Left ventricle myocardium superior (tissue), 1 donor: ENCODE measurements at regions of chr15 and their contacts with region 1.

Region 1: DNA sequence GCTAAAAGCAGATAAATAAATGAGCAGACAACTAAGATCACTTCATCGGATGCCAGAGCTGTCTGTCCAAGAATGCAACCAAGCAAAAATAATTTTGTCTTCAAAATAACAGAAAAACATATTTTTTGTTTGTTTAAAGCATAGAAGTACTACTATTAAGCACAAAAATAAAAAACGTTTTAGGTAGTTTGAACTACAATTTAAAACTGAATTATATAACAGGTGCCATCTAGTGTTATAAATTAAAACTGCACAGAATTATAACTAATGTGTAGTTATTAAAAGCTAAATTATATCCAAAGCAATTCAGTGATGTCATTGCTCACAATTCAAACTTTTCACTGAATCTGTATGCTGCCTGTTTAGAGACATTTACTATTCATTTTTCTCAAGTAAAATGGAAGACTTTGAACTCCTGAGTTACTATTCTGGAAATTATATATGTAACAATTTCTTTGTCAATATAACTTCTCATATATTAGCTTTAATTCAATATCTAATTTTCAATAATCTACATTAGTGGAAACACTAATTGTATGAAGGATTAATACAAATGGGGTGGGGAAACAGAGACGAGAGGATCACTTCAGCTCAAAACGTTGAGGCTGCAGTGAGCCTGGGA is 29.5 kb downstream of the LINS1 start:
- DNase-seq: no peak
- ATAC-seq: no peak

Region 2: DNA sequence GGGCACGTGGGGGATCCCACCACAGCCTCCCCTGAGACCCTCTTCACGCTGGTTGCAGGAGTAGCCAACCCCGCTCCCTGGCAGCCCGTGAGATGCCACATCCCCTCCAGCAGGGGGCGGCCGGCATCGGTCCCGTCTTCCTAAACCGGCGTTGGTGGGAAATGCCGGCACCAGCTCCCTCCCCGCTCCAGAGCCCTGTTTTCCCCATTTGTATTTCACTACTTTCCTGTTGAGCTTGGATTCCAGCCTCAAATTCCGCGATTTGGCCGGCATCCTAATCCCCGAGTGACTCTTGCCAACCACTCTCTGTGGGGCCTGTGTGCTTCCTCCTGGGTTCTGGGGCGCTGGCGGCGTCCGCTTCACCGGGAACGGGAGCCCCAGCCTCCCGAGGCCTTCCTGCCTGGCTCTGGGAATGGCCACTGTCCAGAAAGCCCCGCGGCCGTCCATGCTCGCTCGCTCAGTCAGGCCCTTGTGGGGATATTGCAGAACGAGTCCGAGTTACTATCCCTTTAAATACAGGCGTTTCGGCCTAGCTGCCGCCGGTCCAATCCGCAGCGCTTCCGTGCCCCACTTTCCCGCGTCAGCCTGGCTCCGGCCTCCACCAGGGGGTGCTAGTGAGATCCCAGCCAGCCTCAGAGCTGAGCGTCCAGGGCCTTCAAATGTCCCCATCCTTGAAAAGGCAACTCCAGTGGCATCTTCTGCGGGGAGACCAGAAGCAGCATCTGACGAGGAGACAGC is 222.6 kb before region 1 on chr15:
- intact Hi-C with region 1: loop called (anchors 5 kb)
- DNase-seq: peak; percentile 95
- ATAC-seq: peak; percentile 97

Region 3: GRCh38 chr15:100889385-100890050 is 317.0 kb after region 1 on chr15:
- intact Hi-C with region 1: no loop called
- DNase-seq: peak; percentile 61
- ATAC-seq: peak; percentile 83